Heart left ventricle (tissue), 16 donors: ENCODE measurements at regions of chr9 and their contacts with region 1.

Region 1: DNA sequence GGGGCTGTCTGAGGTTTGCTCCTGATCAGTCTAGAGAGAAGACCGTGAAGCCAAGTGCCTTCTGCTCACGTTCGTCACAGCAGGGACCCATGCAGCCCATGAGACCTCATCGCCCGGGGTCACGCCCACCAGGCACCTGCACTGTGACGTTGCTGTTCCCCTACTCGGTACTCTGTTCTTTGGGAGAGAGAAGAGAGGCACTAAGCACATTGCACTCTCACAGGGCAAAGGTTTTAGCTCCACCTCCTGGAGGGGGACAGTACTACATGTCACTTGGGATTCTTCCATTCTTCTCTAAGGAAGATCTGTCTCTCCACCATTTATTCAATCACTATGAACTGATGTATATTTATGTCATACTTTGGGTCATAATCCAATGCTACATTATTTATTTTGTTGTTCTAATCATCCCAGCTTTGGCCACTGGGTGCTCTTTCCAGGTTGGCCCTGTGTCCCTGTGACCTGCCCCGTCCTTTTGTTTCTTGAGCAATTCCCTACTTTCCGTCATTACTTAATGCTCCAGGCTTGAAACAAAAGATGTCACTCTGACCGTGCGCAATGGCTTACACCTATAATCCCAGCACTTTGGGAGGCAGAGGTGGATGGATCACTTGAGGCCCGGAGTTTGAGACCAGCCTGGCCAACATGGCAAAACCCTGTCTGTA is 31.4 kb upstream of the BRD3 start:
- DNase-seq: no peak
- ATAC-seq: peak in 1 of 4 donors; percentile 72
- H3K4me3 ChIP-seq: no peak overlapping the region
- H3K27ac ChIP-seq: no peak overlapping the region
- H3K4me1 ChIP-seq: no peaks in the 10 kb centered on the region
- H3K27me3 ChIP-seq: peaks cover 0 to 8% (median 0%) of the 10 kb centered on the region in 9 donors
- CTCF ChIP-seq: peak; percentile 39 to 65 (median 60)
- POLR2A ChIP-seq: no peak

Region 2: DNA sequence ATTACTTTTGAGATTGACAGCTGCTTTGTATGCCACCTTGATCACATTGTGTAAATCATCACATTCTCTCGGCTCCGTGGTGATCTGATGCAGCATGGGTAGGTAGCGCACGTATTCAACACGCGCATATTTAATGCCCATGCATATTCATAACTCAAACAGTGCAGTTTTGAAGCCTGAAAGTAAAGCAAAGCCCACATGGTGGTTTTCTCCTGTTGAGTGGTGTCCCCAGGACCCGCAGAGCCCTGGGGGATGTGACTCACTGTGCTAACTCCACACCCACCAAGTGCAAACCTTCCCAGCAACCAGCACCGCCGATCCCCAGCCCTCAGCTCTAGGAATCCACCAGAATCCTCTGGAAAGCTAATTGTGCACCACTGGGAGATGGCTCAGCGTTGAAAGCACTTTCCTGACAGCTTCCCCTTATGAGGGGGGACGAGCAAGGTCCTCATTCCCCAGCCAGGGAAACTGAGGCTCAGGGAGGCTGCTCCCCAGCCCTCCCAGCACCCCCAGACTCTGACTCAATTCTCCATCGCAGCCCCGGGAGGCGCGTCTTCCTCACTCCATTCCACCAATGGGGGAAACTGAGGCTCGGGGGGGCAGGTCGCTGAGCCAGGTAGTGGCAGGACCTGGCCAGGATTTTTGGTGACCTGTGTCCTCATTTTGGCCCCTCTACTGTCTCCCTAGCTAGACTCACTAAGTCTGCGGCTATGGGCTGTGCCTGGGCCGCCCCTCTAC is 407.5 kb before region 1 on chr9:
- intact Hi-C with region 1: no loop called
- DNase-seq: peak in 3 of 5 donors; percentile 8 to 60 (median 14)
- ATAC-seq: no peak
- H3K4me3 ChIP-seq: no peak overlapping the region
- H3K27ac ChIP-seq: no peak overlapping the region
- H3K4me1 ChIP-seq: peaks cover 0 to 2% (median 0%) of the 10 kb centered on the region in 12 donors
- H3K27me3 ChIP-seq: peaks cover 0 to 4% (median 0%) of the 10 kb centered on the region in 9 donors
- CTCF ChIP-seq: no peak
- POLR2A ChIP-seq: no peak

Region 3: DNA sequence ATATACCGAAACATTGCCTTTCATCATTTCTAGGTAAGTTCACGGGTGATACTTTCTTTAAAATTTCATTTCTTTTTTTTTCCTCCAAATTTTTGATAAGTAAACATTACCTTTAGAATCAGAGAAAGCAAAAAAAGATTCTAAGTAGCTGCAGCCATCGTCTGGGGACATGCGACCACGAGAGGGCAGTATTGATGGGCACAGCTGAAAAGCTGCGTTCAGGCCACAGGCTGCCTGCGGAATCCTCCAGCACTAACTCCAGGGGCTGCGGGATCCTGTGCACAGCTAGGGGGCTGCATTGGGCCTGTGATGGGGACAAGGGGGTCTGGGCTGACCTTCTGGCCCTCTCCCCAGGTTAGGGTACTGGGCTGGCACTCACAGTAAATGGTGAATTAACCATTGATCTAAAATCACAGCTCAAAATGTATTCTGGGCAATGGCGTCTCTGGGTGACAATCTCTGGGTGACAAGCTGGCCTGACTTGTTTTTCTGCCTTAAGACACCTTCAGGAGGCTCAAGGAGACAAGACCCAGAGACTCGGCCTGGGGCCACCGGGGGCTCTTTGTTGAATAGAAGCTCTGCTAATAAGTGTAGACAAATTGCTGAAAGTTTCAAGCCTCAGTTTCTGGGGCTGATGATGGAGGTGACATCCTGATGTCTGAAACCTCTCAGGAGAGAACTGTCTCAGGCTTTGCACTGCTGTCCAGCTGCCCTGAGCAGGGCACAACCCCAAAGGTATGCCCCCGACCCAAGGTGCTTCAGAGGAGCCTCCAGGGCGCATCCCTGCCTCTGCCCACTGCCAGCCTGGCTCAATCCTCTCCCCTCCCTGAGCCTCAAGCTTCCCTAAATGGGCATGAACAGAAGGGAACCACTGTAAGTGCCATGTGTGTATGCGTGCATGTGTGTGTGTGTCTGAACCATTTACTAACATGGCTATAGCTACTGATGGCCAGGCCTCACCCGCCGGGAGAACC is 316.8 kb before region 1 on chr9:
- intact Hi-C with region 1: loop called in 3 of 10 experiments (anchors 10 kb)
- DNase-seq: peak; percentile 65 to 78 (median 74)
- ATAC-seq: peak in 3 of 4 donors; percentile 6 to 69 (median 64)
- H3K4me3 ChIP-seq: no peak overlapping the region
- H3K27ac ChIP-seq: no peak overlapping the region
- H3K4me1 ChIP-seq: peaks cover 0 to 17% (median 0%) of the 10 kb centered on the region in 12 donors
- H3K27me3 ChIP-seq: no peaks in the 10 kb centered on the region
- CTCF ChIP-seq: peak; percentile 65 to 89 (median 81)
- POLR2A ChIP-seq: no peak

Region 4: DNA sequence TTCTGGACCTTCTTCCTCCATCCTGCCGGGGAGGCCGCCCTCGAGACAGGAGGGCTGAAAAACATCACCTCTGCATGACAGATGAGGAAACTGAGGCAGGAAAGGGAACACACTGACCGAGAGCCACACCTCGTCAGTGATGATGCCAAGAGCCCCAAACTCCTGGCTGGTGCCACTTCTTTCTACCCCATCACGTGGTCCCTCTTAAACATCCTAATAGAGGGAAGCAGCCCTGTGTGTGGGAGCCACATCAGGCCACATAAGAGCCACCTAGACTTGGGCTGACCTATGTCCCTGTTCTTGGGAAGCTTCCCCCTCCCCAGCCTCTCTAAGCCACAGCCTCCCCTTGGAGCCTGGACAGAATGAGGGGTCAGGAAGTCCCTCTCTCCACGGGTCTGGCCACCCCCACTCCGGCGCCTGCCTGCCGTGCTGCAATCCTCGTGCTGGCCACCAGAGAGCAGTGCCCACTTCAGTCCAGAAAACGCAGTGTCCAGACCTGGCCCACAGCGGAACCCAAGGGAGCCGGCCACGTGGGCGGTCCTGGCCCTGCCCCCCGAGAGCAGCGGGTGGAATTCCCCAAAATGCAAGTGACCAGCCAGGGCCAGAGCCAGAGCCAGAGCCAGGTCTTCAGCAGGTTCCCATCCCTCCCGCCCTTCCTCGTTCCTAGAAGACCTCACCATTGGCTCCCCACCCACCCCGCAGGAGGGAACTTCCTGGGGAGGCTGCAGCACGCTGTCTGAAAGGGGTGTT is 306.4 kb before region 1 on chr9:
- intact Hi-C with region 1: loop called in 7 of 10 experiments (anchors 2 to 10 kb)
- DNase-seq: peak; percentile 72 to 90 (median 81)
- ATAC-seq: peak; percentile 70 to 88 (median 82)
- H3K4me3 ChIP-seq: peak overlapping the region in 3 of 12 donors; percentile 22 to 23 (median 22)
- H3K27ac ChIP-seq: no peak overlapping the region
- H3K4me1 ChIP-seq: peaks cover 0 to 33% (median 17%) of the 10 kb centered on the region in 12 donors
- H3K27me3 ChIP-seq: no peaks in the 10 kb centered on the region
- CTCF ChIP-seq: peak; percentile 91 to 99 (median 96)
- POLR2A ChIP-seq: no peak

Region 5: DNA sequence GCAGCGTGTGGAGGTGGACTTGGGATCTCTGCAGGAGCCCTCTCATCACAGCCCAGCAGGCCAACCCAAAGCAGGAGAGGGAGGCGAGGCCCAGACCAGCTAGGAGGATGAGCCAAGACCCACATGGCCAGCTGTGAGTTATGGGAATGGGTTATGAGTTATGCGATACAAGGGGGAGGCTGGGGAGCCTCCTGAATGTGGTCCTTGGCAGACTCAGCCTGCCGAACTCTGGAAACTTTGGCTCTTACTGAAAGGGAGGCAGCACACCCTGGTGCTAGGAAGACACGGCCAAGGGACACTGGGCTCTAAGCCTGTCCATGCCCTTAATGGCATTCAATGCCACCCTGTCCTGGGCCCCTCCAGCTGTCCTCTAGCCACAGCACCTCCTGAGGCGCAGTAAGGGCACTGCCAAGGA is 99.4 kb before region 1 on chr9:
- intact Hi-C with region 1: loop called in 1 of 10 experiments (anchors 10 kb)
- DNase-seq: no peak
- ATAC-seq: peak in 1 of 4 donors; percentile 12
- H3K4me3 ChIP-seq: no peak overlapping the region
- H3K27ac ChIP-seq: no peak overlapping the region
- H3K4me1 ChIP-seq: no peaks in the 10 kb centered on the region
- H3K27me3 ChIP-seq: no peaks in the 10 kb centered on the region
- CTCF ChIP-seq: no peak
- POLR2A ChIP-seq: no peak

Region 6: DNA sequence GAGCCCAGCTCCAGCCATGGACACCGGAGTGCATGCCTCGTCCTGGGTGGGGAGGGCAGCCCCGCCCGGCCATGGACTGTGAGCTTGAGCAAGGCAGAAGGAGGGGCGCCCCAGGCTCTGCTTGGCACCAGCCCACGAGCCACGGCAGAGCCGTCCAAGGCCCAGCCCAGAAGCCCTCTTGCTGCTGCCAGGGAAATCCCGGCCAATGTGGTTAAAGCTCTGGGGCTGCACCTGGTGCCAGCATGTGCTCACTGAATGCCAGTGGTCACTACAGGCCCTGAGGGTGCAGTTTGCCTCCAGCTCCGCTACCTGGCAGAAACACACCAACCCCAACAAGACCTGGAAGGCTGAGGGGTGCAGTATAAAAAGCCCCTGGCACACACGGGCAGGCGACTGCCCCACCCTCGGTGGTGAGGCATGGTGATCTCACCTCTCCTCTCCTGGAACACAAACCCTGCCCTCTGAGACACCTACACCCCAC is 43.2 kb before region 1 on chr9:
- intact Hi-C with region 1: no loop called
- DNase-seq: peak; percentile 73 to 90 (median 85)
- ATAC-seq: peak; percentile 84 to 91 (median 88)
- H3K4me3 ChIP-seq: peak overlapping the region in 2 of 12 donors; percentile 1 to 18
- H3K27ac ChIP-seq: peak overlapping the region in 6 of 12 donors; percentile 10 to 37 (median 22)
- H3K4me1 ChIP-seq: peaks cover 13 to 62% (median 47%) of the 10 kb centered on the region in 12 donors
- H3K27me3 ChIP-seq: no peaks in the 10 kb centered on the region
- CTCF ChIP-seq: no peak
- POLR2A ChIP-seq: no peak

Region 7: DNA sequence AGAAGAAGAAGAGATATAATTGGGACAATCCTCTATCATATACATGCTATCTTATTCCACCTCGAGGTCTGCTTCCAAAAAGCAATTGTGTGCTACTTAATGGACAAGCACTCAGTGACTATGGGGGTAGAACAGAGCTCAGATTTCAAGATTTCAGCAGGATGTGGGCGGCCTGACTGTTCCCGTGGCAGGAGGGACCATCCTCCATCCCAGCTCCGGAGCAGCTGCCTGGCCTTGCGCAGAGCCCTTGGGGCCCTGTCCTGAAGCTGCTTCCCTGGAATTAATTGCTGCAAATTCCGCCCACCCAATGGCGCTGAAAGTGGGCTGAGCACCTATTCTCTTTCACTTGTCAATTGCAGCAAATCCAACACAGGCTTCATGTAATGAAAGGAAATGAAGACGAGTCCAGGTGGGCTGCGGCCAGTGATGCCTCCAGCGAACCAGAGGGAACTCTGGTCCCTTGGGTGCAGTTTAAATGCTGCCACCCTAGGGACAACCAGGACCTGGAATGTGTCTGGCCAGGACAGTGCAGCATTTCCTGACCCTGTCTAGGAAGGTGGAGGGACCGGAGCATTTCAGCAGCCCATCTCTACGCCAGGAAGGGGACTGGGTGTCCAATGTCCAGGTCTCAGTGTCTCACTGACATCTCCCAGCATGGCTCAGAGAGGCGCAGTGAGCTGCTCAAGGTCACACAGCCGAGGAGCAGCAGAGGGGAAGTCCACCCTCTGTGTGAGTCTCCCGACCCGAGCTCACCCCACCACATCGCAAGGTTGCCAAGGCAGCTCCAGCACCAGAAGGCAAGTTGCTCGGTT is 869.0 kb after region 1 on chr9:
- intact Hi-C with region 1: loop called in 1 of 10 experiments (anchors 5 kb)
- DNase-seq: peak in 1 of 5 donors; percentile 22
- ATAC-seq: no peak
- H3K4me3 ChIP-seq: no peak overlapping the region
- H3K27ac ChIP-seq: no peak overlapping the region
- H3K4me1 ChIP-seq: peaks cover 0 to 11% (median 5%) of the 10 kb centered on the region in 12 donors
- H3K27me3 ChIP-seq: peaks cover 0 to 43% (median 7%) of the 10 kb centered on the region in 9 donors
- CTCF ChIP-seq: no peak
- POLR2A ChIP-seq: no peak